HCT116 (cell line): ENCODE measurements at regions of chr19 and their contacts with region 1.

Region 1: DNA sequence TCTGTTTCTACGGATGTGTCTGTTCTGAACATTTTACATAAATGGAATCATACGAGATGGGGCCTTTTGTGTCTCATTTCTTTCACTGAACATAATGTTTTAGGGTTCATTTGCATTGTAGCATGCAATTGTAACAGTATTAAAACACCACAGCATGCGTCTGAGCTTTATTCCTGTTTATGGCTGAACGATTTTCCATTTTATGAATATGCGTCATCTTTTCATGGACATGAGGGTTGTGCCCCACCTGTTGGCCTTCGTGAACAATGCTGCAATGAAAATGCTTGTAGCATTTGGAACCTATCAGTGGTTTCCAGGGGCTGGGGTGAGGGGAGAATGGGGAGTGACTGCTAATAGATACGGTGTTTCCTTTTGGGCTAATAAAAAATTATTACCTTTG is 5.1 kb downstream of the OR10H1 start:
- DNase-seq: no peak
- ATAC-seq: peak; percentile 60
- H3K4me3 ChIP-seq: no peak overlapping the region
- H3K27ac ChIP-seq: no peak overlapping the region
- H3K4me1 ChIP-seq: peaks cover 27 to 44% of the 10 kb centered on the region in 2 experiments
- H3K27me3 ChIP-seq: no peaks in the 10 kb centered on the region
- CTCF ChIP-seq: peak; percentile 63 to 79 (median 67); a peak in 5 of 6 replicates
- POLR2A ChIP-seq: no peak
- RAD21 ChIP-seq: peak; percentile 79

Region 2: GRCh38 chr19:15584541-15585115 is 225.7 kb before region 1 on chr19:
- CTCF ChIA-PET with region 1: no interaction called
- POLR2A ChIA-PET with region 1: no interaction called
- RAD21 ChIA-PET with region 1: no interaction called
- intact Hi-C with region 1: loop called (anchors 1 kb)
- DNase-seq: peak; percentile 67
- ATAC-seq: peak; percentile 98
- H3K4me3 ChIP-seq: no peak overlapping the region
- H3K27ac ChIP-seq: no peak overlapping the region
- H3K4me1 ChIP-seq: peaks cover 0 to 9% of the 10 kb centered on the region in 2 experiments; a peak in 1 of 4 replicates
- H3K27me3 ChIP-seq: peaks cover 13% of the 10 kb centered on the region; the same call in 1 of the 2 replicates
- CTCF ChIP-seq: peak; percentile 97
- POLR2A ChIP-seq: no peak
- RAD21 ChIP-seq: peak; percentile 93

Region 3: DNA sequence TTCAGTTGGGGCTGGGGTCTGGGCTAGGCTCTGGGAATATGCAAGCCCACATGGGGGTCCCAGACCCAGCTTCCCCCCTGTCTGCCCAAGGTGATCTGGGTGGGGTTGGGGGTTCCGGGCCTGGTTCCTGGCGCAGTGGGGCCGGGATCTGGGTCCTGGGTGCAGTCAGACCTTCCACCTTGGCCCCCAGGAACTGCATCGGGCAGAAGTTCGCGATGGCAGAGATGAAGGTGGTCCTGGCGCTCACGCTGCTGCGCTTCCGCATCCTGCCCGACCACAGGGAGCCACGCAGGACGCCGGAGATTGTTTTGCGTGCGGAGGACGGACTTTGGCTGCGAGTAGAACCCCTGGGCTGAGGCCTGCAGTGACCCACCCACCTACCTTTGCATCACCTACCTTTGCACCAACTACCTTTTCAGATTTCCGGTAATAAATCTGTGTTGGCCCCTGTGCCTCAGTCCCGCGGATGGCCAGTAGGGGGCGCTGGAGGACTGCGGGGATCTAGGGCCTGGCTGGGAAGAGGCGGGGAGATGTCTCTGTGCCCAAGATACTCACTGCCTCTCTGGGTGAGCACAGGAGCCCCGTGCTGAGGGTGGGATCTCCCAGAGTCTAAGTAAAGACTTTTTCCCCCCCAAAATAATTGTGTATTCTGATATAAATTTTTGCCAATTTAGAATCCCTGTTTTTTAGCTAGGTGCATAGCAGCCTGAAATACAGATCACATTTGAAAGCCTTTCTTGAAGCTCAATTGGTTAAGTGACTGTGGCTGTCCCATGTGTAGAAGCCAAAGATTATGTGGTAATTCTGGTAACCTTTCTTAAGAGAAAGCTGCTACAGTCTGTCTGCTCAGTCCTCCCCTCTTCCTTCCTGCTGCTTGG is 181.1 kb before region 1 on chr19:
- CTCF ChIA-PET with region 1: interaction called, 7 read pairs
- POLR2A ChIA-PET with region 1: no interaction called
- RAD21 ChIA-PET with region 1: interaction called, 3 read pairs
- intact Hi-C with region 1: loop called (anchors 1 kb)
- DNase-seq: peak; percentile 51
- ATAC-seq: peak; percentile 96
- H3K4me3 ChIP-seq: no peak overlapping the region
- H3K27ac ChIP-seq: no peak overlapping the region
- H3K4me1 ChIP-seq: peaks cover 0 to 4% of the 10 kb centered on the region in 2 experiments; a peak in 1 of 4 replicates
- H3K27me3 ChIP-seq: 0 out of 2 replicates have a peak, but pooled peaks cover 6% of the 10 kb centered on the region
- CTCF ChIP-seq: peak; percentile 90 to 99 (median 97)
- POLR2A ChIP-seq: no peak
- RAD21 ChIP-seq: peak; percentile 96

Region 4: GRCh38 chr19:15790096-15790495 is 20.2 kb before region 1 on chr19:
- CTCF ChIA-PET with region 1: no interaction called
- POLR2A ChIA-PET with region 1: no interaction called
- RAD21 ChIA-PET with region 1: no interaction called
- intact Hi-C with region 1: no loop called
- DNase-seq: no peak
- ATAC-seq: no peak; the same call in 1 of the 2 replicates
- H3K4me3 ChIP-seq: no peak overlapping the region
- H3K27ac ChIP-seq: no peak overlapping the region
- H3K4me1 ChIP-seq: peaks cover 0 to 12% of the 10 kb centered on the region in 2 experiments; a peak in 1 of 4 replicates
- H3K27me3 ChIP-seq: 0 out of 2 replicates have a peak, but pooled peaks cover 4% of the 10 kb centered on the region
- CTCF ChIP-seq: no peak
- POLR2A ChIP-seq: no peak
- RAD21 ChIP-seq: no peak

Region 5: DNA sequence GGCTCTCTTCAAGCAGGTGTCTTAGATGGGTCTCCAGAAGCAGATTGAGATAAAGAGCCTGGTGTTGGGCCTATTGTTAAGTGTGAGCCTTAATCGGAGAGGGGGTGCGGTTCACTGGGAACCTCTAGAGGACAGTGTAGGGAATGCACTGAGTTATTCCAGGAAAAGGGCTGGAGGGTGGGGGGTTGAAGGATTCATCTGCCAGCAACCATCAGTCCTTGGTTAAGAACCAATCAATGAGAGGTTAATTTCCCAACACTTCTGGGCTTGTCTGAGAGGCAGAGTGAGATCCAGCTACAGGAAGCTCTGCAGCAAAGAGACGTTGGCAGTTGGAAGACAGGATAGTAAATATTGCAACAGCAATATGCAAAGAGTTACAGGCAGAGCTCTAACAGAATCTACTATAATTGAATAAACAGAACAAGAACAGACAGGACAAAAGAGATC is 58.8 kb after region 1 on chr19:
- CTCF ChIA-PET with region 1: interaction called, 6 read pairs
- POLR2A ChIA-PET with region 1: no interaction called
- RAD21 ChIA-PET with region 1: no interaction called
- intact Hi-C with region 1: loop called (anchors 2 kb)
- DNase-seq: peak; percentile 71
- ATAC-seq: peak; percentile 85
- H3K4me3 ChIP-seq: no peak overlapping the region
- H3K27ac ChIP-seq: peak overlapping the region; percentile 54
- H3K4me1 ChIP-seq: peaks cover 29 to 65% of the 10 kb centered on the region in 2 experiments
- H3K27me3 ChIP-seq: no peaks in the 10 kb centered on the region
- CTCF ChIP-seq: peak; percentile 55 to 79 (median 76); a peak in 5 of 6 replicates
- POLR2A ChIP-seq: no peak
- RAD21 ChIP-seq: peak; percentile 91

Region 6: DNA sequence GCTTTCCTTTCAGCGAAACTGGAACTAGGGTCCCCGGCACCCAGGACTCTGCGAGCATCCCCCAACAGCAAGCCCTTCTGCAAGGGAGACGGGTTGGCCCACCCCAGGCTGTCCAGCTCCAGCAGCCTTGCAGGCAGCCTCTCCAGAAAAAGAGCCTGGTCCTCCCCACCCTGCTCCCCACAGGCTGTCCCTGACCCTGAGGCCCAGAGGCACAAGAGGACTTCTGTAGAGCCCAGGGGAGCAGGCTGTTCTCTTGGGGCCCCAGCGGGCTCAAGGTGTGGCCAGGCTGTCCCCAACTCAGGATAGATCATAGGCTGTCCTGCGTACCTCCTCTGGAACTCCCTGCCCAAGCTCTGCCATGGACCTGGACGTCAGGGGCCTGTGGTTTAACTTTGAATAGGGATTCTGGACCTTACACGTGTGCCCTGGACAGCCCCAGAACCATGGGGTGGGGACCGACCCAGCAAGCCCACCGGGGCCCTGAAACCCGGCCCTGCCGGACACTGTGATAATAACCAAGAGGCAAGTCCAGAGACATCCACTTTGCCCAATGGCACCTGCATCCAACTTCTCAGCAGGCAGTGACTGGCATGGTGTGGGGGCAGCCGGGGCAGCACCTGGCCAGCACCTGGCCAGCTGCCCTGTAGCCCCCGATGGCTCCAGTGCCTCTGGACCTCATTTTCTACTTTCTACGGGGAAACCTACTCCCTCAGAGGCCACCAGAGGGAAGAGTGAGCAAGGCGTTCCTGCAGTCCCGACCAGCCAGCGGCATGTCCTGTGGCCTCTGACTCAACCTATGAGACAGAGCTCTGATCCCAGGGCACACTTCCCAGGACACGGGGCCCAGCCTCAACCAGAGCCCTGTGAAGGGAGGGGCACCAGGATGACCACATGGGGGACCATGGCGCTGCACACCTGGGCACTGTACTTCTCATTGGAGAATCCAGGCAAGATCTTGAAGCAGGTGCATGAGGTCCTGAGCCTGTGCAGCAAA is 215.1 kb after region 1 on chr19:
- CTCF ChIA-PET with region 1: interaction called, 4 read pairs
- POLR2A ChIA-PET with region 1: no interaction called
- RAD21 ChIA-PET with region 1: no interaction called
- intact Hi-C with region 1: loop called (anchors 1 kb)
- DNase-seq: peak; percentile 56
- ATAC-seq: peak; percentile 99
- H3K4me3 ChIP-seq: no peak overlapping the region
- H3K27ac ChIP-seq: no peak overlapping the region
- H3K4me1 ChIP-seq: peaks cover 0 to 11% of the 10 kb centered on the region in 2 experiments; a peak in 2 of 4 replicates
- H3K27me3 ChIP-seq: no peaks in the 10 kb centered on the region
- CTCF ChIP-seq: peak; percentile 56 to 81 (median 63); a peak in 5 of 6 replicates
- POLR2A ChIP-seq: no peak
- RAD21 ChIP-seq: peak; percentile 75